ENCODE measurements at regions of chr9 and their contacts with region 1.

Region 1: DNA sequence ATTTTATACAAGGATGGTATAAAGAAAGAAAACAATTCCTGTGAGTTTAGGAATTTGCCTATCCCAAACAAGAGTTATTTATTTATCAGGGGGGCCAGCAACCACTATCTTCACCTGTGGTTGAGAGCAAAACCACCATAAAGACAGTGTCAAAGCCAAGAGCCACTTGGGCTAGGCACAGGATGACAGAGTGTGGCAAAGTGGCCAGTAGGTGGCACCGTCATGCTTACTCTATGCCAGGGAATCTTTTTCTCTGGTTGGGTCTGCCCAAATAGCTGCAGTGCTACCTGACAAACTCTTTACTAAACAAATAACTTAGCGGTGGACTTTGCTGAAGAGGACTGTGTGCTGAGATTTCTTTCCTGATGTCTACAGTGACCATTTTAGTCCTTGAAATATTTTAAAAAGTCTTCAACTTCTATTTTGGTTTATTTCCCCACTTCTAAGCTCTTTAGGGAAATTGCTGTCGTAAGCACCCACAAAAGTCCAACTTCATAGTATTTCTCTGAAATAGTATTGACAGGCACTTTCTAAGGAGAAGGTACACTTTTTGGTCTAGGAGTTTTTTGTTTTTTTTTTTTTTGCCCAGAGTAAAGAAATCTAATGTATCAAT is 285.0 kb downstream of the RFX3 start:
- DNase-seq: peak; percentile 35
- ATAC-seq: peak; percentile 90
- H3K4me3 Mint-ChIP-seq: no peak overlapping the region
- H3K27ac Mint-ChIP-seq: no peak overlapping the region
- H3K4me1 Mint-ChIP-seq: peaks cover 4% of the 10 kb centered on the region
- H3K27me3 Mint-ChIP-seq: no peaks in the 10 kb centered on the region
- CTCF ChIP-seq: peak; percentile 65

Region 2: GRCh38 chr9:3299872-3300271 is 59.1 kb after region 1 on chr9:
- CTCF ChIA-PET with region 1: no interaction called
- POLR2A ChIA-PET with region 1: no interaction called
- intact Hi-C with region 1: loop called (anchors 10 kb)
- DNase-seq: no peak
- ATAC-seq: peak; percentile 93
- H3K4me3 Mint-ChIP-seq: no peak overlapping the region
- H3K27ac Mint-ChIP-seq: peak overlapping the region; percentile 51
- H3K4me1 Mint-ChIP-seq: peaks cover 22% of the 10 kb centered on the region
- H3K27me3 Mint-ChIP-seq: no peaks in the 10 kb centered on the region
- CTCF ChIP-seq: no peak

Region 3: DNA sequence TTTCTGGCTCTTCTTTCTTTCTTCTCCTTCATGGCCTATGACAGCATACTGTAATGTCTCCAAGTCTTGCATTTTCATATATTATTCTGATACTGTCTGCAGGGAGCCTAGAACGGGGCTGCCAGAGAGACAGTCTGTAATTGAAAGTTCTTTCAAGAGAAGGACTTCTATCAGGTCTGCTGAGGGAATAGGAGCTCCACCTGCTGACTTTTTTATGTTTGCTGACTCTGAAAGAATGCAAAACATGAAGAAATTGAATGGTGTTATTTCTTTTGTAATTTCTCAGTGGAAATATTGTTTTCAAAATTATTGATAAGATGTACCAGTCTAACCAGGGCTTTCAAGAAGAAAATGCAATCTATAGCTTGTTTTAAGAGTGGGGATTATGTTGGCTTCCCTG is 406.9 kb after region 1 on chr9:
- CTCF ChIA-PET with region 1: no interaction called
- POLR2A ChIA-PET with region 1: no interaction called
- intact Hi-C with region 1: loop called (anchors 10 kb)
- DNase-seq: no peak
- ATAC-seq: no peak
- H3K4me3 Mint-ChIP-seq: no peak overlapping the region
- H3K27ac Mint-ChIP-seq: no peak overlapping the region
- H3K4me1 Mint-ChIP-seq: no peaks in the 10 kb centered on the region
- H3K27me3 Mint-ChIP-seq: no peaks in the 10 kb centered on the region
- CTCF ChIP-seq: no peak

Region 4: DNA sequence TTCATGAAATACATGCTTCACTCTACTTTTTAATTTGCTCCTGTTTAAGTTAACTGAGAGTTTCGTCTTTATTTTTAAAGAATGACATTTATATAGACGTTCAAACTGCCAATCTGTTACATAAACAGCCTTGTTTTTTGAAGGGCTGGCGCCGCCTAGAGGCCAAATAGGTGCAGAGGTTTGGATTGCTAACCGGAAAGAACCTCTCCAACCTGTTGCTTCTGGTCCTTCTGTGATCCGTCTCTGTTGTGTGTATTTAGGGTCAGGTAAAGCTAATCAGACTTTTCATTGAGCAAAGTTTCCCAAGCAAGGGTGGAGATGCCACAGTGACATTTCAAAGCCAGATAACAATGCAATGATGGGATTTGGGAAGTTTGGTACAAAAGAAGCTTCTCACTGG is 1098.6 kb after region 1 on chr9:
- CTCF ChIA-PET with region 1: interaction called, 9 read pairs
- POLR2A ChIA-PET with region 1: no interaction called
- intact Hi-C with region 1: loop called (anchors 2 kb)
- DNase-seq: peak; percentile 34
- ATAC-seq: peak; percentile 56
- H3K4me3 Mint-ChIP-seq: no peak overlapping the region
- H3K27ac Mint-ChIP-seq: no peak overlapping the region
- H3K4me1 Mint-ChIP-seq: peaks cover 2% of the 10 kb centered on the region
- H3K27me3 Mint-ChIP-seq: peaks cover 13% of the 10 kb centered on the region
- CTCF ChIP-seq: no peak